ENCODE measurements at regions of chr14 and their contacts with region 1.

Region 1: GRCh38 chr14:88189417-88190191 is 133.5 kb downstream of the KCNK10 start:
- DNase-seq: peak; percentile 83
- ATAC-seq: peak; percentile 92
- H3K4me3 Mint-ChIP-seq: peak overlapping the region; percentile 59
- H3K27ac Mint-ChIP-seq: peak overlapping the region; percentile 73
- H3K4me1 Mint-ChIP-seq: peaks cover 34% of the 10 kb centered on the region
- H3K27me3 Mint-ChIP-seq: no peaks in the 10 kb centered on the region
- CTCF ChIP-seq: no peak; the same call in none of the 2 replicates

Region 2: GRCh38 chr14:88106377-88106776 is 83.2 kb before region 1 on chr14:
- CTCF ChIA-PET with region 1: no interaction called
- POLR2A ChIA-PET with region 1: no interaction called
- DNase-seq: no peak
- ATAC-seq: peak; percentile 82
- H3K4me3 Mint-ChIP-seq: no peak overlapping the region
- H3K27ac Mint-ChIP-seq: no peak overlapping the region
- H3K4me1 Mint-ChIP-seq: no peaks in the 10 kb centered on the region
- H3K27me3 Mint-ChIP-seq: no peaks in the 10 kb centered on the region
- CTCF ChIP-seq: no peak

Region 3: GRCh38 chr14:88129306-88130056 is 60.1 kb before region 1 on chr14:
- CTCF ChIA-PET with region 1: interaction called, 12 read pairs
- POLR2A ChIA-PET with region 1: no interaction called
- DNase-seq: no peak
- ATAC-seq: peak; percentile 80
- H3K4me3 Mint-ChIP-seq: no peak overlapping the region
- H3K27ac Mint-ChIP-seq: no peak overlapping the region
- H3K4me1 Mint-ChIP-seq: peaks cover 11% of the 10 kb centered on the region
- H3K27me3 Mint-ChIP-seq: peaks cover 5% of the 10 kb centered on the region; the same call in 1 of the 2 replicates
- CTCF ChIP-seq: no peak

Region 4: DNA sequence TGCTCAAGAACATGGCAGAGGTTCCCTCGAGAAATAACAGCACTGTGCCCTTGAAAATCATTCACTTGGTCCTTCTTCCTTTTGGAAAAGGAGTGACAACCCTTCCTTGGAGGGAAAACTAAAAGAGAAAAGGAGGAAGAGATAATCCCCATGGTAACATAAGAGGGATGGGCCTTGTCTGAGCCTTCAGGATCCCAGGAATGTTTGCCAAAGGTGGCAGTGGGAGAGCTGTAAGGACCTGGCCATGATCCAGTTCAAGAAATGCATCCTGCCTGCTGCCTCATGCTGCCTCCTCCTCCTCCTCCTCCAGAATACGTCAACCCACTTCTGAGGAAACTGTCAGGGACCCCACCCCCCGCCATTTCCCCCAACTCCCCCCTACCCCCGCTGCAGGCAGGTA is 14.6 kb after region 1 on chr14:
- CTCF ChIA-PET with region 1: interaction called, 34 read pairs
- POLR2A ChIA-PET with region 1: no interaction called
- DNase-seq: no peak
- ATAC-seq: no peak; the same call in 1 of the 2 replicates
- H3K4me3 Mint-ChIP-seq: no peak overlapping the region
- H3K27ac Mint-ChIP-seq: no peak overlapping the region
- H3K4me1 Mint-ChIP-seq: no peaks in the 10 kb centered on the region
- H3K27me3 Mint-ChIP-seq: peaks cover 3% of the 10 kb centered on the region; the same call in 1 of the 2 replicates
- CTCF ChIP-seq: no peak

Region 5: GRCh38 chr14:88256997-88257950 is 67.7 kb after region 1 on chr14:
- CTCF ChIA-PET with region 1: interaction called, 12 read pairs
- POLR2A ChIA-PET with region 1: no interaction called
- DNase-seq: no peak
- ATAC-seq: no peak
- H3K4me3 Mint-ChIP-seq: no peak overlapping the region
- H3K27ac Mint-ChIP-seq: no peak overlapping the region
- H3K4me1 Mint-ChIP-seq: no peaks in the 10 kb centered on the region
- H3K27me3 Mint-ChIP-seq: no peaks in the 10 kb centered on the region; the same call in 1 of the 2 replicates
- CTCF ChIP-seq: no peak

Region 6: GRCh38 chr14:88323523-88324199 is 134.1 kb after region 1 on chr14:
- CTCF ChIA-PET with region 1: interaction called, 18 read pairs
- POLR2A ChIA-PET with region 1: no interaction called
- DNase-seq: peak; percentile 70
- ATAC-seq: peak; percentile 59
- H3K4me3 Mint-ChIP-seq: peak overlapping the region; percentile 90
- H3K27ac Mint-ChIP-seq: no peak overlapping the region
- H3K4me1 Mint-ChIP-seq: peaks cover 15% of the 10 kb centered on the region
- H3K27me3 Mint-ChIP-seq: peaks cover 52% of the 10 kb centered on the region
- CTCF ChIP-seq: no peak

Region 7: DNA sequence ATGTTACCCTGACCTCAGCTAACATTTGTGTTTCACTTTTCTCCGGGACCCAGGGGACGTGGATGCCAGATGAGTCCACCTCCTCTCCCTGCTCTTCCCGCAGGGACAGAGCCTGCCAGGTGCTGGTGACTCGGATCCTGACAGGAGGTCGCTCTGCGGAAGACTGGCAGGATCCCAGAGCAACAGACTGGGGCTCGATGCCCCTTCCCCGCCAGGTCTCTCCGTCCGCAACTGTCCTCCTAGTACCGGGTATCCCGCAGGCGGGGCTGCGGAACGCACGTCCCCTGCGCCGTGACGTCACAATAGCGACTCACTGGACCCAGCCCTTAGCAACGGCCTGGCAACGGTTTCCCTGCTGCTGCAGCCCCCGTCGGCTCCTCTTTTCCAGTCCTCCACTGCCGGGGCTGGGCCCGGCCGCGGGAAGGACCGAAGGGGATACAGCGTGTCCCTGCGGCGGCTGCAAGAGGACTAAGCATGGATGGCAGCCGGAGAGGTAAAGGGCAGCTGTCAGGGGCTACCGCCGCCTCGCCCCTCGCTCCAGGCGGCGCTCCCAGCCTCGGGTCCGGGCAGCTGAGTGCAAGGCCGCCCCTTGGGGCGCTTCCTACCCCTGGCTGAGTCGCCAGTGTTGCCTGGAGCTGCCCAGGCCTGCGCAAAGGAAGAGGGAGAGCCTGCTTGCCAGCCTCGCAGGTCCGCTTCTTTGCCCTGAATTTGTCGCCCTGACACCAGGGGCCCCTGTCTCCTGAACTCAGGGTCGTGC is 195.9 kb after region 1 on chr14 and contains the start of gene SPATA7:
- CTCF ChIA-PET with region 1: interaction called, 77 read pairs
- POLR2A ChIA-PET with region 1: interaction called, 3 read pairs
- DNase-seq: peak; percentile 96
- ATAC-seq: peak; percentile 97
- H3K4me3 Mint-ChIP-seq: peak within 1 kb of the TSS; percentile 97
- H3K27ac Mint-ChIP-seq: peak within 1 kb of the TSS; percentile 95
- H3K4me1 Mint-ChIP-seq: peaks cover 15% of the 10 kb centered on the region; the same call in 1 of the 2 replicates
- H3K27me3 Mint-ChIP-seq: peaks cover 12% of the 10 kb centered on the region
- CTCF ChIP-seq: no peak
- total RNA-seq, gene SPATA7: 8.0 to 11.2 TPM (median 8.8 TPM) in 3 replicates

Region 8: DNA sequence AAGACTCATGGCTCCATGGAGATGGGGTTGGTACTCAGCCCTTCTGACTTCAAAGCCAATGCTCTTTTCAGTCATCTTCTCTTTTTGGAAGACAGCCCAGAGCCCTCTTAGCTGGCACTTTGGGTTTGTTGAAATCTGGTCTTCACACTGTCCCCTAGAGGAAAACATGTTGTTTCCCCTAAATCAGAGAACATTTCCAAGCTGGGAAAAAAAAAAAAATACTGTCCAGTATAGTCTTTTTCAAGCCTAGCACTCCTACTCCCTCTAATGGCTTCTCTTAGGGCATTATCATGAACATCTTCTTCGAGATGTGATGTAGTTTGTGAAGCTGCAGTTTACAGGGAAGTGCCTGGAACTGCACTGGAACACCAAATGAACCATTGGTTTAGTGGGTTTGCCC is 370.2 kb after region 1 on chr14:
- CTCF ChIA-PET with region 1: interaction called, 13 read pairs
- POLR2A ChIA-PET with region 1: no interaction called
- DNase-seq: no peak
- ATAC-seq: no peak
- H3K4me3 Mint-ChIP-seq: no peak overlapping the region
- H3K27ac Mint-ChIP-seq: no peak overlapping the region
- H3K4me1 Mint-ChIP-seq: peaks cover 29% of the 10 kb centered on the region
- H3K27me3 Mint-ChIP-seq: no peaks in the 10 kb centered on the region; the same call in 1 of the 2 replicates
- CTCF ChIP-seq: no peak